GM23248 (cell line): ENCODE measurements at regions of chr18 and their contacts with region 1.

Region 1: GRCh38 chr18:49858309-49859020 is 45.1 kb upstream of the ACAA2 start:
- DNase-seq: peak; percentile 77
- H3K4me3 ChIP-seq: no peak overlapping the region
- H3K27ac ChIP-seq: no peak overlapping the region
- H3K4me1 ChIP-seq: peaks cover 4% of the 10 kb centered on the region; the same call in 1 of the 2 replicates
- H3K27me3 ChIP-seq: no peaks in the 10 kb centered on the region; the same call in 1 of the 2 replicates

Region 2: GRCh38 chr18:49510393-49511115 is 347.9 kb before region 1 on chr18:
- in situ Hi-C with region 1: loop called (anchors 5 kb)
- DNase-seq: peak; percentile 75
- H3K4me3 ChIP-seq: no peak overlapping the region
- H3K27ac ChIP-seq: no peak overlapping the region
- H3K4me1 ChIP-seq: no peaks in the 10 kb centered on the region
- H3K27me3 ChIP-seq: peaks cover 10% of the 10 kb centered on the region; the same call in 1 of the 2 replicates

Region 3: DNA sequence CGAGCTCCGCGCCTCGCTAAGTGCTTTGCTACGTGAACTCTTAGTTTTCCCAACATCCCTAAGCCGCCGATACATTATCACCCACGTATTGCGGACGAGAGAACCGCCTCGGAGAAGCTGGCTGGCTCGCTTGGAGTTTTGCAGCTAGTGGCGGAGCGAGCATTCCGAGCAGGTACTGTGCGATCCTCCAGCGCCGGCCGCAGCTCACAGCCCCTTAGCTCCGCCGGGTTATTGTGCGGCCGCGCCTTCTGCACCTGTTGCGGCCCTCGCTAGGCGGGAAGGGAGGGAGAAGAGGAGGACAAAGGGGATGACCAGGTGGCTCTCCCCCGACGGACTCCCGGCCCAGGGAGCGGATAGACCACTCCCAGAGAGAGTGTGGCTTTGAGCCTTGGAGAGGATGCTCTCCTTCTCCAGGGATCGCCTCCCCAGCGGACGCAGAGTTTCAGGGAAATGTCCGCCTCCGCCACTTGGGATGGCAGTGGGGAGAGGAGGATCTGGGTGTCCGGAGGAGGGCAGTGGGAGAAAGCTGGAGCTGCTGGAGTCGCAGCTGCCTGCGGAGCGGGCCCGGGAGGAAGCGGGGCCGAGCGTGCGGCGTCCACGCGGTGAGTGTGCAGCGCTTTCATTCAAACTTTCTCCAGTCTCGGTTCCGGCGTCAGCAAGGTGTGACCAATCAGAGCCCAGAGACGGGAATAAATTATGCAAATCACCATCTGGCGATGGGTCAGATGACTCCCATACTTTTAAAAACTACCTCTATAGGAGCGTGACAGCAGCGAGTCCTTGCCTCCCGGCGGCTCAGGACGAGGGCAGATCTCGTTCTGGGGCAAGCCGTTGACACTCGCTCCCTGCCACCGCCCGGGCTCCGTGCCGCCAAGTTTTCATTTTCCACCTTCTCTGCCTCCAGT is 296.9 kb before region 1 on chr18 and contains the start of gene LIPG:
- in situ Hi-C with region 1: loop called (anchors 10 kb)
- DNase-seq: peak; percentile 74
- H3K4me3 ChIP-seq: peak within 1 kb of the TSS; percentile 63
- H3K27ac ChIP-seq: no peak within 1 kb of the TSS
- H3K4me1 ChIP-seq: peaks cover 8% of the 10 kb centered on the region; the same call in 1 of the 2 replicates
- H3K27me3 ChIP-seq: peaks cover 44% of the 10 kb centered on the region
- total RNA-seq, gene LIPG: 0.25 and 0.43 TPM in 2 replicates

Region 4: GRCh38 chr18:49618742-49619681 is 239.5 kb before region 1 on chr18:
- in situ Hi-C with region 1: no loop called
- DNase-seq: no peak
- H3K4me3 ChIP-seq: no peak overlapping the region
- H3K27ac ChIP-seq: no peak overlapping the region
- H3K4me1 ChIP-seq: no peaks in the 10 kb centered on the region
- H3K27me3 ChIP-seq: peaks cover 17% of the 10 kb centered on the region; the same call in 1 of the 2 replicates

Region 5: DNA sequence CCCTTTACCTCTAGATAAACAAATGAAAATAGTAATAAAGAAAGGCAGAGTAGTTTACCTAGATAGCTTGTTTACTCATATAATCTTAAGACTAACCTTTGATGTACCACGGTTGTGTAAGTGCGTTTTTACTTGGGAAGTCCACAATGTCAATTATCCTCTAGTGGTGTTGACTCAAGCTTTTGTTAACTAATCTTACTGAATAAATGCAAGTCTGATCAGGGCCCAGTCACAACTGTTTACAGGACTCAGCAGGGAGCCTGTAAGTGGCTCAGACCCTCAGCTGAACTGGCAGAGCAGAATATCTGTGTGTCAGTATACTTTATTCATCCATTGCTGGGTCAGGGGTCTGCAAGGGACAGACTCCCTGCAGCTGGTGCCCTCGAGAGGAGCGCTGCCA is 53.0 kb after region 1 on chr18:
- in situ Hi-C with region 1: loop called (anchors 10 kb)
- DNase-seq: no peak
- H3K4me3 ChIP-seq: no peak overlapping the region
- H3K27ac ChIP-seq: no peak overlapping the region
- H3K4me1 ChIP-seq: no peaks in the 10 kb centered on the region
- H3K27me3 ChIP-seq: no peaks in the 10 kb centered on the region; the same call in 1 of the 2 replicates